ENCODE measurements at regions of chr15 and their contacts with region 1.

Region 1: GRCh38 chr15:48861813-48862431 is 16.0 kb upstream of the EID1 start:
- DNase-seq: no peak
- ATAC-seq: peak; percentile 57
- H3K4me3 Mint-ChIP-seq: no peak overlapping the region
- H3K27ac Mint-ChIP-seq: no peak overlapping the region
- H3K4me1 Mint-ChIP-seq: no peaks in the 10 kb centered on the region
- H3K27me3 Mint-ChIP-seq: peaks cover 15% of the 10 kb centered on the region
- CTCF ChIP-seq: peak; percentile 47

Region 2: DNA sequence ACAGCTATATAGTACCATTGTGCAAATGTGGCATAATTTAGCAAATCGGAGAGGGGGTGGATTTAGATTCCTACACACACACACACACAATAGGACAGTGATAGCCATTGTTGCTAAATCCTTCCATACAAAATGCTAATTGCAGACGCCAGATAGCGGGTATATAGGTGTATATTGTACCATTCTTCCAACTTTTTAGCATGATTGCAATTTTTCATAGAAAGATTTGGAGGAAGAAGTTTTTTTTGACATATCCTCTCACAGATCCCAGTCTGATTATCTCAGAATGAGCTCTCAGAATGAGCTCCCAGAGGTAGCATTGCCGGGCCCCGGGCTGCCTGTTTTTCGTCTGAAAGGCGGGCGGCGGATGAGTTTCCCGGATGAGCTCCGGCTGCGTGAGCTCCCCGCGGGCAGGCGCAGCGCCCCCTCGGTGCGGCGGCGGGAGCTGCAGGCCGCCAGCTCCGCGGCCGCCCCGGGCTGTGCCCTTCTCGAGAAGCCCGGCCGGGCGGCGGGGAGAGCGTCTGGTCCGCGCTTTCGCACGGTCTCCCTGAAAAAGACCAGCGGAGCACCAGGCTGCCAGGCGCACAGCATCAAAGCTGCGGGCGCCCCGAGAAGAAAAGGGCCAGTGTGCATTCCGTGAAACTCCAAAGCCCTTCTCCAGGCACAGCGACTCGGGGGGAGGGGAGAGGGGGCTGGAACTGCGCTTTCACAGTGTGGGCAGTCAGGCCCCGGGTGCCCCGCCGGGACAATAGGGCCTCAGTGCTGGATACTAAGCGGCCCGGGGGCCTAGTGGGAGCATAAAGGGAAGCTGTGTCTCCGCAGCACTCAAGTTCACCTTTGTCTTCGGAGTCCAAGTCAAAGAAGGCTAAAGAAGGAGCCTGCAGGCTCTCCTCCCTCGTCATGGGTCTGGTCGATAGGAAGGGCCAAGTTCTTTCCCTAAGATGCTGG is 113.8 kb after region 1 on chr15:
- CTCF ChIA-PET with region 1: interaction called, 7 read pairs
- POLR2A ChIA-PET with region 1: no interaction called
- intact Hi-C with region 1: loop called (anchors 1 kb)
- DNase-seq: peak; percentile 73
- ATAC-seq: peak; percentile 98
- H3K4me3 Mint-ChIP-seq: peak overlapping the region; percentile 30
- H3K27ac Mint-ChIP-seq: no peak overlapping the region
- H3K4me1 Mint-ChIP-seq: peaks cover 1% of the 10 kb centered on the region
- H3K27me3 Mint-ChIP-seq: peaks cover 18% of the 10 kb centered on the region
- CTCF ChIP-seq: peak; percentile 73

Region 3: DNA sequence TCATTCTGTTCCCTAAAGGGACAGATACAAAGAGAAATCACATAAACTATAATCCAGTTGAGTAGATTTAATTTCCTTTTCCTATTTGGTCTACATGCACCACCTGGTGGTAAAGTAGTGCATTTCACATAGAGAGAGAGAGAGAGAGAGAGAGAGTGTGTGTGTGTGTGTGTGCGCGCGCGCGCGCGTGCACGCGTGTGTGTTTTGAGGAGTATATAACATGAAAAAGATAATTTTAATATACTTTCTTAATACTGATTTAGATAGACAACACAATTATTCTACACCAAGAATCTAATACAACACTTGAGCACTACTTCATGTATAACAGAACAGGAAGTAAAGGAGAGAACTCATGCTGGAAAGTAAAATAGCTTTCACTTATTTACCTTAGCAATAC is 560.1 kb after region 1 on chr15:
- CTCF ChIA-PET with region 1: interaction called, 64 read pairs
- POLR2A ChIA-PET with region 1: no interaction called
- intact Hi-C with region 1: loop called (anchors 1 kb)
- DNase-seq: peak; percentile 18
- ATAC-seq: peak; percentile 42
- H3K4me3 Mint-ChIP-seq: no peak overlapping the region
- H3K27ac Mint-ChIP-seq: no peak overlapping the region
- H3K4me1 Mint-ChIP-seq: peaks cover 3% of the 10 kb centered on the region
- H3K27me3 Mint-ChIP-seq: peaks cover 3% of the 10 kb centered on the region
- CTCF ChIP-seq: no peak

Region 4: DNA sequence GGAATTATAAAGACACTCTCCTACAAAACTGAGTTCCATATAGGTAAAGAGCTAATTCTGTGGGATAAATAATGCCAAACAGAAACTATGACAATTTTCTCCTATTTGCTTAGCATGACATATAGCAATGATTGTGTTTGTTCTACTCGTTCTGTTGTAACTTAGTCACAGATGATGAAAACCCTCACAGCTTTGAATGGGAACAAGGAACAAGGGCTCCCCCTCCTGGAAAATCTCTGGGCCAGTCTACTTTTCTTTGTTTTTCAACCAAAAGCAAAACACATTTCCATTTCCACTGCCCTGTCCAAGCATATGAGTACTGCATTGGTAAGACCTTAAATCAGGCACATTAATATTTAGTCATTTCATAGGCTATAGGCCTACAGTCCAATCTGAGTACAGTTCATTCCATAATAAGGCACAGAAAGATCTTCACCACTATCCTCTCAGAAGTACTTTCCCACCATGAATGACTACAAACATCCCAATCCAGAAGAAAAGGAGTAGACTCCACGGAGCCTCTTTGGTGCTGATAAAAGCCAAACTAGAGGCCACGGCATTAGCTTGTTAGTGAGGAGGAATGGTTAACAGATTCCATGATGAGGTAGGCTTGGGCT is 1190.0 kb after region 1 on chr15:
- CTCF ChIA-PET with region 1: interaction called, 3 read pairs
- POLR2A ChIA-PET with region 1: no interaction called
- intact Hi-C with region 1: loop called (anchors 2 kb)
- DNase-seq: no peak
- ATAC-seq: no peak
- H3K4me3 Mint-ChIP-seq: no peak overlapping the region
- H3K27ac Mint-ChIP-seq: no peak overlapping the region
- H3K4me1 Mint-ChIP-seq: no peaks in the 10 kb centered on the region
- H3K27me3 Mint-ChIP-seq: no peaks in the 10 kb centered on the region
- CTCF ChIP-seq: no peak

Region 5: DNA sequence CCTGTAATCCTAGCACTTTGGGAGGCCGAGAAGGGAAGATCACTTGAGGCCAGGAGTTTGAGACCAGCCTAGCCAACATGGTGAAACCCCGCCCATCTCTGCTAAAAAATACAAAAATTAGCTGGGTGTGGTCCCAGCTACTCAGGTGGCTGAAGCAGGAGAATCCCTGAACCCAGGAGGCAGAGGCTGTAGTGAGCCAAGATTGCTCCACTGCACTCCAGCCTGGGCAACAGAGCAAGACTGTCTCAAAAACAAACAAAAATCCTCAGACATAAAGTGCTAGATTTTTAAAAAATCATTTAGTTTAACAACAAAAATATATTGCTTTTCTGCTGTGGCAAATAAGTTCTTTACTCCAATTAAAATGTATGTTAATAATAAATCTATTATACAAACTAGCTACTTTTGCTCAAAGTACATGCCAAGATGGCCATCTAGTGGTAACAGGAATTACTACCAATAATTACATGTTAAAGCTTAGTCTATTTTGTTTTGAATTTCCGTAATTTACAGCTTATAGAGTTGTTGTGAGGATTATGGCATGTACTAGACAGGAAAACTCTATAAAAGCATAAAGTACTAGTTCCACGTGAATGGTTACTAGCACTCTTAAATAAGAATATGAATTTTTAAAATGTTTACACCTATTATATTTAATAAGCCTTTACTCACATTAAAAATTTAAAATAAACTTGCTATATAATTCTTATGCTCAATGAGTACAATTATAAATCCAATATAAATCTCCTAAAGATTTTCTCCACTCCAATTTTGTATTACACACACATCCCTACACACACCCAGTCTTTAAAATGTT is 1454.1 kb after region 1 on chr15:
- CTCF ChIA-PET with region 1: interaction called, 9 read pairs
- POLR2A ChIA-PET with region 1: no interaction called
- intact Hi-C with region 1: loop called (anchors 5 kb)
- DNase-seq: no peak
- ATAC-seq: peak; percentile 54
- H3K4me3 Mint-ChIP-seq: no peak overlapping the region
- H3K27ac Mint-ChIP-seq: no peak overlapping the region
- H3K4me1 Mint-ChIP-seq: peaks cover 7% of the 10 kb centered on the region
- H3K27me3 Mint-ChIP-seq: no peaks in the 10 kb centered on the region
- CTCF ChIP-seq: no peak